ENCODE measurements at regions of chr15 and their contacts with region 1.

Region 1: DNA sequence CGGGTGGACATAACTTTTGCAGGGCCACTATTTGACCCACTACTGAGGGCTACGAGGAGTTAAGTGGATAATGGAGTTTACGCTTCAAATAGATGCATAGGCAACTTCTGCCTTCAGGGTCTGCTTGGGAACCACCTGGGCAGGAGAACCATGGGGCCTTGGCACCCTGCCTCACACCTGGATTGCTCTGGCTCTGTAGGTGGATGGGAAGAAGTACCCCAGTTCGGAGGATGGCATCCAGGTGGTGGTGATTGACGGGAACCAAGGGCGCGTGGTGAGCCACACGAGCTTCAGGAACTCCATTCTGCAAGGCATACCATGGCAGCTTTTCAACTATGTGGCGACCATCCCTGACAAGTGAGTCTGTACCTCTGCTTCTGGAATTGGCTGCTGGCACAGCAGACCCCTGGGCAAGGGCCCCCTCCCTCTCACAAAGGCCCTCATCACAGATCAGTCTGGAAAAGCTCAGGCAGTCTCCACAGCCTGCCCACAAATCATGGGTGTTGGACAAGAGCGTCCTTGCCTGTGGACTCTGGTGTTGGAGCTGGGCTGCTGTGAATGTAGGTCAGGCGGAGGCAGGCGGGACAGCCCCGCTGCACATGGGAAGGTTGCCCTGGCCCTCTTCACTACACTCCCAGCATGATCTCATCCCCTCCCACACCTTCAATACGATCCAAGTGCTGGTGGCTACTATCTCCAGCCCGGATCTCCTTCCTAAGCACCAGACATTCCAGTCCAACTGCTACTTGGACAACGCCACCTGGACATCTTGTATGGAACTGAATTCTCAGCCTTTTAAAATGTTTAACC is 46.7 kb downstream of the MESD start:
- DNase-seq: peak in 7 of 10 donors; percentile 18 to 72 (median 62)
- H3K4me3 ChIP-seq: no peak overlapping the region
- H3K27ac ChIP-seq: peak overlapping the region in 10 of 59 donors; percentile 9 to 62 (median 36)
- H3K27me3 ChIP-seq: no peaks in the 10 kb centered on the region
- CTCF ChIP-seq: no peak

Region 2: GRCh38 chr15:80925597-80926059 is 17.3 kb before region 1 on chr15:
- intact Hi-C with region 1: loop called in 1 of 2 experiments (anchors 1 kb)
- DNase-seq: peak in 1 of 10 donors; percentile 67
- H3K4me3 ChIP-seq: no peak overlapping the region
- H3K27ac ChIP-seq: peak overlapping the region in 1 of 59 donors; percentile 54
- H3K27me3 ChIP-seq: no peaks in the 10 kb centered on the region
- CTCF ChIP-seq: no peak

Region 3: DNA sequence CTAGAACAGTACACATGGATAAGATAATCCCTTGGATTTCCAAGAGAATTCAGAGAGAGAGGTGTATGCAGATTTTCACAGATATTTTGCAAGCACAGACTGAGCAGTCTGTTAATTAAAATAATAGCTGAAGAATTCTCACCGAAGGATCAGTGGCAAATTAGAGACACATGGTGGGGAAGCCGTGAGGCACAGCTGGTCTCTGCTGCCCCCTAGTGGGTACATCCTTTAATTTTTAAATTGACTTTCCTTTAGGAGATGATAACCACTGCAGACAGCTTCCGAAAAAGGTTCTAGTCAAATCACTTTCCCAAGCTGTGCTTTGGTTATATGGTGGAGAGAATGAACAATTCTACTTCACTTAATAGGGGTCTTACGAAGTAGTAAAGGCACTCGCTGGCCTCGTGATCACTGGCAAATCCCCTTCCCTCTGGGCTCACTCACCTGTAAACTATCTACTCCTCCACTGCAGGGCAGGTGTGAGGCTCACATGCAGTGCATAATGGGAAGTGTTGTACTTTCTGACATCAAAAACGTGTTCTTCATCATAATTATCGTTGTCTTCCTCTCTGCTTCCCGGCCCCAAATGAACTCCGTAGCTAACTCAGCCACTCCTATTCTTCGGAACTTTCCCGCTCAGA is 27.2 kb after region 1 on chr15:
- intact Hi-C with region 1: no loop called
- DNase-seq: peak in 6 of 10 donors; percentile 51 to 80 (median 67)
- H3K4me3 ChIP-seq: no peak overlapping the region
- H3K27ac ChIP-seq: no peak overlapping the region
- H3K27me3 ChIP-seq: no peaks in the 10 kb centered on the region
- CTCF ChIP-seq: peak; percentile 80 to 98 (median 92)

Region 4: GRCh38 chr15:81244306-81244705 is 301.4 kb after region 1 on chr15:
- intact Hi-C with region 1: no loop called
- DNase-seq: no peak
- H3K4me3 ChIP-seq: no peak overlapping the region
- H3K27ac ChIP-seq: no peak overlapping the region
- H3K27me3 ChIP-seq: no peaks in the 10 kb centered on the region
- CTCF ChIP-seq: no peak

Region 5: GRCh38 chr15:81419332-81419943 is 476.5 kb after region 1 on chr15:
- intact Hi-C with region 1: no loop called
- DNase-seq: no peak
- H3K4me3 ChIP-seq: no peak overlapping the region
- H3K27ac ChIP-seq: no peak overlapping the region
- H3K27me3 ChIP-seq: no peaks in the 10 kb centered on the region
- CTCF ChIP-seq: no peak

Measured in dorsolateral prefrontal cortex (tissue), 120 donors.